ENCODE measurements at regions of chr7 and their contacts with region 1.

Region 1: GRCh38 chr7:100132697-100133151 is 6.0 kb downstream of the MBLAC1 start:
- DNase-seq: peak; percentile 81
- CTCF ChIP-seq: peak; percentile 97

Region 2: DNA sequence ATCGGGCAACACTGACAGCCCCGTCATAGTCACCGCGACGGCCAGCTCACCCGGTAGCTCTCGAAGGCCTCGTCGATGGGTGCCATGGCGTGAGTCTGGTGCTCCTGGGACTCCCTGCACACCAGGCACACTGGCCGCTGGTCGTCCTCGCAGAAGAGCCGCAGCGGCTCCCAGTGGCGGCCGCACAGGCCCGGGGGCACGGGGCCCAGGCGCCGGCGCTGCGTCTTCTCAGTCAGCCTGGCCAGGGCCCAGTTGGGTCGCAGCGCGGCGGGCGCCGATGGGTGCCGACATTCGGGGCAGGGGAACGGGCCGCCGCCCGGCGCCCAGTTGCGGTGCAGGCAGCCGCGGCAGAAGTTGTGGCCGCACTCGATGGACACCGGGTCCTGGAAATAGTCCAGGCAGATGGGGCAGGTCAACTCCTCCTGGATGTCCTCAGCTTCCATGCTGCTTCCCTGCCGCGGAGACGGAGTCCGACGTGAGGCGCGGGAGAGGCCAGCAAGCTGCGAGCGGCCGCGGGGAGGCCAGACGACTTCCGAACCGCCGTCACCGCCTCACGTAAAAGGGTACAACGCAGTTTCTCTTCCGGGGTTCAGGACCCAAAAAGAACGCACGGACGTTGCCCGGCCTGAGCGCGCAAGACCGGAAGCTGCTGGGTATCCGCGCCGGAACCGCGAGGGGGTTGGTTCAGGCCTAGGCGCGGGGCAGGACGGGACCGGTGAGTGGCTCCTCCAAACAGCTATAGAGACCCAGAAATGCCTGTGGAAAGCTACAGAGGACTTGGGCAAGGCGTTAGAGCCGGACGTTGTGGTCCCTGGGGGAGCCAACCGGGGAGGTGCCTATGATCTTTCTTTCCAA is 213.5 kb before region 1 on chr7 and contains the start of gene TRIM4:
- CTCF ChIA-PET with region 1: interaction called, 16 read pairs
- POLR2A ChIA-PET with region 1: no interaction called
- DNase-seq: peak; percentile 95
- CTCF ChIP-seq: peak; percentile 27

Region 3: GRCh38 chr7:100101016-100101862 is 31.5 kb before region 1 on chr7 and contains the starts of genes AP4M1 and MCM7:
- CTCF ChIA-PET with region 1: interaction called, 16 read pairs
- POLR2A ChIA-PET with region 1: no interaction called
- DNase-seq: peak; percentile 99
- CTCF ChIP-seq: no peak

Region 4: GRCh38 chr7:100167921-100168323 is 35.2 kb after region 1 on chr7:
- CTCF ChIA-PET with region 1: interaction called, 23 read pairs
- POLR2A ChIA-PET with region 1: no interaction called
- DNase-seq: no peak
- CTCF ChIP-seq: no peak

Region 5: DNA sequence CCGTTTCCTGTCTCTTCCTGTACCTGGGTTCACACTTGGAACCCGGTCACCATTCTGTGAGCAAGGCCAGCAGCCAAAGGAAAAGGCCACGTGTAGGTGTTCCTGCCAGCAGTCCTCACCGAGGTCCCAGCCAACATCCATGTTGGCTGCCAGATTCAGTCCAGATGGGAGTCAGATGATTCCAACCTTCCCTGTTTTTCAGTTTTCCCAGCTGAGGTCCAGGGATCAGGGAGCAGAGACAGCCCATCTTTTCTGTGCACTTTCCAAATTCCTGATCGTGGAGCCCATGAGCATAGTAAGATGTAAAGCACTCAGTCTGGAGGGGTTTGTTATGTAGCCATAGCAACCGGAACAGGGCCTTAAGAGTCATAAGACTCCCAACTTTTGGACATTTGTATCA is 83.2 kb after region 1 on chr7:
- CTCF ChIA-PET with region 1: interaction called, 15 read pairs
- POLR2A ChIA-PET with region 1: no interaction called
- DNase-seq: no peak
- CTCF ChIP-seq: no peak

Region 6: GRCh38 chr7:100407285-100408180 is 274.8 kb after region 1 on chr7:
- CTCF ChIA-PET with region 1: interaction called, 25 read pairs
- POLR2A ChIA-PET with region 1: no interaction called
- DNase-seq: peak; percentile 74
- CTCF ChIP-seq: peak; percentile 64